PC-9 (cell line): ENCODE measurements at regions of chr5 and their contacts with region 1.

Region 1: DNA sequence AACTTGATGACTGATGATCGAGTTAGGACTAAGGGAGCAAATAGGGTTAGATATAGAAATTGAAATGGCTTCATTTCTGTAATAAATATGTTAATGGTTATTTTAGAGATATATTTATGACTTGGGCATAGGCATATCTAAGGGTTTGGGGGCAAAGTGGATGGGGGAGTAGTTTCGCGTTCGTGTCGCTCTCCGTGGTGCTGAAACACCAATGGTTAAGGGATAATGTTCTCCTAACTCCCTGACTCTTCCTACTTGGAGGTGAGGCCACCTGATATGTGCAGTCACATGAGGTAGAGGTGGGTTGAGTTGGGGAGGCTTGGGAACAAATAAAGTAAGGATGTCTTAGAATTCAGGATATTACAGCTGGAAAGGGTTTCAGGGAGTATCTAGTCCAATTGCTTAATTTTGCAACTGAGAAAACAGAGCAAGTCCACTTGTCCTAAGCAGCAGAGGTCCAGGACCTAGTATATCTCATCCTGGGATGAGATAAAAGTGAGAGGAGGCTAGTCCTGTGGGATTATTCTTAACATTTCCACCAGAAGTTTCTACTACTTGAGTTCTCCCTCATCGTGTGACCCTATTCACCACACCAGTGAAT is 44.0 kb upstream of the MAP1B start:
- DNase-seq: no peak
- H3K4me3 ChIP-seq: no peak overlapping the region
- H3K27ac ChIP-seq: no peak overlapping the region
- H3K4me1 ChIP-seq: peaks cover 36% of the 10 kb centered on the region
- H3K27me3 ChIP-seq: no peaks in the 10 kb centered on the region
- CTCF ChIP-seq: no peak

Region 2: DNA sequence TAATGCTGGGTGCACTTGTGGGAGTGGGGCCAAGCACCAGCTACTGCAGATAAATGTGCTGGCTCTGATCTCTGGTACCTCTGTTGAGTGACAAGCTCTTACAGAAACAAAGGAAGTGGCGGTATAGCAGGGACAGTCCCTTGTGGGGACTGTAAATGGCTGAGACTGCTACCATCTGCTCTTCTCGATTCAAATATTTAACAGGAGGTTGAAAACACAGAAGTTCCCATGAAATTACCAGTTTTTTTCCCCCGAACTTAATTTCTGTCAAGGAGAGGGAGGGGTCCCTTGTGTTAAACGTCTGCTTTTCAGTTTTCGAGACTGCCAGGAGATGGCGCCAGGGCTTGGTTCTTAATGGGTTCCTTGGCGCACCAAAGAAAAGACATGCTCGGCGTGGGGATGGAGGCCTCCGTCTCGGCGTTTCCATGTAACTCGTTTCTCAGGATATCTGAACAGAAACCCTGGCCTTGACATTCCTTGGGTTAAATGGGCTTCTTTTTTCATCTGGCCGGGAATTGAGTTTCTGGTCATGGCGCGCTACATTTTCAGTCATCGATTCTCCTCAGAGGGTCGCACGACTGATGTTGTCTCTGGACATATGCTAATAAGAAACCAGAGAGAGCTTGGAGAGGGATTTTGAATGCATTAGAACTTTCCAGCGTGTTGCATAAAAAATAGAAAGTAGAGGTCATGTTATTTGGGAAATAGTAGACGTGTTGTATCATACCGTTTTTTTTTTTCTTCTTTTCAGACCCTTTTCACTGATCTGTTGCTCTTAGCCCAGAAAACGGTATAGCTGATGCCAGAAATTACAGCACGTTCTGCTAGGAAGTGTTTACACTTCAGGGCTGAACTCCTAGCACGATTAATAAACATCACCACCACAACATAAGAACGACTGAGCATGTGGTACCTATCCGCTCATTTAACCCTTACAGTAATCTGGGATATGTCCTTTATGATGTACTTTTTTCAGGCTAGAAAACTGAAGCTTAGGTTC is 280.2 kb before region 1 on chr5:
- CTCF ChIA-PET with region 1: interaction called, 5 read pairs
- POLR2A ChIA-PET with region 1: no interaction called
- intact Hi-C with region 1: loop called (anchors 1 kb)
- DNase-seq: peak in 1 of 2 experiments; percentile 74
- H3K4me3 ChIP-seq: no peak overlapping the region
- H3K27ac ChIP-seq: no peak overlapping the region
- H3K4me1 ChIP-seq: no peaks in the 10 kb centered on the region
- H3K27me3 ChIP-seq: no peaks in the 10 kb centered on the region
- CTCF ChIP-seq: peak; percentile 80

Region 3: DNA sequence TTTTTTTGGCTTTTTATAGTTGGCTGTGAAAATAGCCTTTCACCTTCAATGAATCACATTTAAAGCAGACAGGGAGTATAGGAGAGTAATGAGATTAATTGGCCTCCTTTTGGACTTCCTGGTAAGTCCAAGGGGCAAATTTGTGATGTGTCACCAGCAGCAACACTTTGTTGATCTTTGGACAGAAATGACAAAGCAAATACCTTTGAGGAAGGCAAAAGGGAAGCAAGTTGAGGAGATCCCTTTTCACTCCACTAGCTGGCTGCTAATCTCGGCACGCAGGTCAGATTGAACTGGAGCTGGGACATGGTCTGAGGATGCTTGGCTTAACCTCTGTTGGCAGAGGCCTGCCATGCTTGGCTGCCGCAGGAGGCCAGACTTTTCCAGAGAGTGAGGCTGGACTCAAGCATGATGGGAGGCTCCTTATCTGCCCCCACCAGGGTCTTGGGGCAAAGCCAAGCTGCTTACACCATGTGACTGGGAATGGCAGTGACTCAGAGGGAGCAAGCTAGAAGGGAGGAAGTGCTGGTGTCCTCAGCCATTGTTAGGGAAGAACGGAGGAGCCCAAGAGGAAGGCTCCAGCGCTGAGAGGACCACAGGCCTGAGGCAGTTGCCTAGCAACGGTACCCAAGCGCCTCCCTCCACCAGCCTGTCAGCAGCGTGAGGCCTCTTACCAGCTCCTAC is 130.5 kb before region 1 on chr5:
- CTCF ChIA-PET with region 1: interaction called, 4 read pairs
- POLR2A ChIA-PET with region 1: interaction called, 16 read pairs
- intact Hi-C with region 1: no loop called
- DNase-seq: peak; percentile 77 to 99
- H3K4me3 ChIP-seq: no peak overlapping the region
- H3K27ac ChIP-seq: peak overlapping the region; percentile 97
- H3K4me1 ChIP-seq: peaks cover 42% of the 10 kb centered on the region
- H3K27me3 ChIP-seq: no peaks in the 10 kb centered on the region
- CTCF ChIP-seq: peak; percentile 38; the same call in 1 of the 2 replicates

Region 4: DNA sequence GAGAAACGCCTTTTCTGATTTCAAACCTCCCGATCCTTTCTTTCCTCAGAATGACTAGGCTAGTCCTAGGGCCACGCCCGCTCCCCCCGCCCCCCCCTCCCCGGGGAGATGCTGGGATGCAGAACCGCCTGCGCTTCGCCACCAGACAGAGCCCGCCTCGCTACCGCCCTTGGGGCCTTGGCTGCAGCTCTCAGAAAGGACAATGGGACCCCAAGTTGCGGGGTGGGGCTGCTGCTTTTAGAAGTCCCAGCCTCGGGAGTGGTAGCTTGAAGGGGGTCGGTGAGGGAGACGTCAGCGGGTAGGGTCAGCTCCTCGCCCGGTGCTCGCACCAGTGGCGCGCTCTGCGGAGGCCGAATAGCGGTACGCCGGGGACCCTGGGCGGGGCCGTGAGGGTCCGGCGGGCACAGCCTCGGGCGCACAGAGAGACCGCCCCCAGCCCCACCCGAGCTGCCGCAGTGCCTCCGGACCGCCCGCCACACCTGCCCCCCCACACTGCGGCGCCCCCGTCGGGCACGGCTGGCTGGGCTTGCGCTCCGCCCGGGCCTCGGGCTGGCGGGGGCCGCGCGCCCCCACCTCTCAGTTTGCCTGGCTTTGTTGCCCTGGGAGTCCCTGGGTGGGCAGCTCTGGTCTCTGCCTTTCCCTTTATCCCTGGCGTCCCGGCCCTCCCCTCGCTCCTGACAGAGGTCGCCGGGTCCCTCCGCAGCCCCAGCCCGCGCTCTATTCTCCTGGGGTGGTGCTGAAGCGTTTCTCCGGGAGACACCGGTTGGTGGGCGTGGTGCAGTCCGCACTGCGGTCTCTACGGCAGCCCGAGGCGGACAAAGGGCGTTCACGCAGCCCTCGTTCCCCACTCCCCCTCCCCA is 45.1 kb after region 1 on chr5:
- CTCF ChIA-PET with region 1: interaction called, 4 read pairs
- POLR2A ChIA-PET with region 1: interaction called, 3 read pairs
- intact Hi-C with region 1: loop called (anchors 1 kb)
- DNase-seq: peak; percentile 56 to 66
- H3K4me3 ChIP-seq: peak overlapping the region; percentile 100
- H3K27ac ChIP-seq: peak overlapping the region; percentile 69
- H3K4me1 ChIP-seq: peaks cover 20% of the 10 kb centered on the region
- H3K27me3 ChIP-seq: no peaks in the 10 kb centered on the region
- CTCF ChIP-seq: no peak

Region 5: DNA sequence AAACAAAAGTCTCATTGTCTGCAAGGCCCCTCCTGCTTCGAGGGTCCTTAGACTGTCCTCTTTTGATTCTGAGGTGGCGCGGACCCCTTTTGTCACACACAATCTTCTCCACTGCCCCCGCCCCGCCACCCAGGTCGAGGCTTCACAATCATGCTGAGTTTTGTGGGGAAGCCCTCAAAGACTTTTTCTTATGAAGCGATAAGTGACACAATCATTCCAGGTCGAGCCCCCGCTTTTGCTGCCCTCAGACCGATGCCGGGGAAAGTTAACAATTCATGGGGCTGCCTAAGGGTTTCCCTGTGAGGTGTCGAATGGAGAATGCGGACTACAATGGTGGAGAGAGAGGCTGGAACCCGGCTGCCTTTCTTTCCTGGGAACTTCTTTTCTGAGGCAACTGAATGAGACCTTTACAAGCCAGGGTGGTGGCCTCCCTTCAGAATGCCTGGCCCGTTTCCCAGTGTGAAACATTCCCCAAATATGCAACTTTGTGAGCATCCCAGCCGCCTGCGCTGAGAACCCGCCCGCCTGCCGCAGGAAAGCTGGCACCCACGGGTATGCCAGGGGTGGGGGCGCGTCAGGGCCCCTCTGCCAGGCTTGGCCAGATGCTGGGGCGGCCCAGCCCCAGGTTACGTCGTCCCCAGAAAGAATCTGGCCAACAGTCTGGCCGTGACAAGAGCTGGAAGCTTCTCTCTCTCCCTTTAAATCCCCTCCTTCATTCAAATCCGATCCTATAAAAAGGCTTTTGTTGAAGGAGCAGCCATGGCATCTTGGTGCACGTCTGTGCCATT is 115.9 kb after region 1 on chr5:
- CTCF ChIA-PET with region 1: no interaction called
- POLR2A ChIA-PET with region 1: no interaction called
- intact Hi-C with region 1: loop called (anchors 1 kb)
- DNase-seq: peak; percentile 66 to 90
- H3K4me3 ChIP-seq: no peak overlapping the region
- H3K27ac ChIP-seq: peak overlapping the region; percentile 62
- H3K4me1 ChIP-seq: peaks cover 5% of the 10 kb centered on the region; the same call in 1 of the 2 replicates
- H3K27me3 ChIP-seq: no peaks in the 10 kb centered on the region
- CTCF ChIP-seq: no peak

Region 6: GRCh38 chr5:73229209-73229661 is 1165.9 kb after region 1 on chr5:
- CTCF ChIA-PET with region 1: no interaction called
- POLR2A ChIA-PET with region 1: interaction called, 15 read pairs
- intact Hi-C with region 1: no loop called
- DNase-seq: peak; percentile 41 to 77
- H3K4me3 ChIP-seq: no peak overlapping the region
- H3K27ac ChIP-seq: 0 out of 2 replicates have a peak overlapping the region, but pooled peaks have one; percentile 4
- H3K4me1 ChIP-seq: peaks cover 15% of the 10 kb centered on the region
- H3K27me3 ChIP-seq: no peaks in the 10 kb centered on the region
- CTCF ChIP-seq: no peak